PC-9 (cell line): ENCODE measurements at regions of chr14 and their contacts with region 1.

Region 1: DNA sequence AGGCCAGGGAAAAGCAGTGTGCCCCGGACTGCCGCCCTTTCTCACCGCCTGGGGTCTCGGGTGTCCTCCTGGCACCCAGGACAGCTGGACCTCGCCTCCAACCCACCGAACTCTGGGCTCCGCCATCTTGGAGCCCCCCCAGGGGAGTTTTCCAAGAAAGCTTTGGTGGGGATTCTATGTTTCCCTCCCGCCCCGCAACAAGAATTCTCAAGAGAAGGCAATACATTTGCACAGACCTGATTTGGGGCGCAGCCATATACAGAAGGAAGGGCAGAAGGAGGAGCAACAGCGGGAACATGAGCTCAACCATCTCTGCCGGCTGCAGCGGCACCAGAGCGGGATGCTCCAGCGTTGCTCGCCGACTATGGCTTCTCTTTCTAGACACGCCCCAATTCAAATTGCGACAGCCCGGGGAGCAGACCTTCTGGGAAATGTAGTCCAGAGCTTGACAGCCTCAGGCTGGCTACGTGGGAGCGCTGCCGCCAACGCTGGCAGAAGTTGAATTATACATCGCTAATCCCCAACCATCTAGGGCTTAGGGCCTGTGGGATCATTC is at the start of gene RDH11:
- DNase-seq: peak; percentile 86 to 91
- H3K4me3 ChIP-seq: peak within 1 kb of the TSS; percentile 97
- H3K27ac ChIP-seq: peak within 1 kb of the TSS; percentile 78
- H3K4me1 ChIP-seq: peaks cover 19% of the 10 kb centered on the region
- H3K27me3 ChIP-seq: no peaks in the 10 kb centered on the region
- CTCF ChIP-seq: no peak
- total RNA-seq, gene RDH11: 73.2 and 97.0 TPM in 2 replicates

Region 2: DNA sequence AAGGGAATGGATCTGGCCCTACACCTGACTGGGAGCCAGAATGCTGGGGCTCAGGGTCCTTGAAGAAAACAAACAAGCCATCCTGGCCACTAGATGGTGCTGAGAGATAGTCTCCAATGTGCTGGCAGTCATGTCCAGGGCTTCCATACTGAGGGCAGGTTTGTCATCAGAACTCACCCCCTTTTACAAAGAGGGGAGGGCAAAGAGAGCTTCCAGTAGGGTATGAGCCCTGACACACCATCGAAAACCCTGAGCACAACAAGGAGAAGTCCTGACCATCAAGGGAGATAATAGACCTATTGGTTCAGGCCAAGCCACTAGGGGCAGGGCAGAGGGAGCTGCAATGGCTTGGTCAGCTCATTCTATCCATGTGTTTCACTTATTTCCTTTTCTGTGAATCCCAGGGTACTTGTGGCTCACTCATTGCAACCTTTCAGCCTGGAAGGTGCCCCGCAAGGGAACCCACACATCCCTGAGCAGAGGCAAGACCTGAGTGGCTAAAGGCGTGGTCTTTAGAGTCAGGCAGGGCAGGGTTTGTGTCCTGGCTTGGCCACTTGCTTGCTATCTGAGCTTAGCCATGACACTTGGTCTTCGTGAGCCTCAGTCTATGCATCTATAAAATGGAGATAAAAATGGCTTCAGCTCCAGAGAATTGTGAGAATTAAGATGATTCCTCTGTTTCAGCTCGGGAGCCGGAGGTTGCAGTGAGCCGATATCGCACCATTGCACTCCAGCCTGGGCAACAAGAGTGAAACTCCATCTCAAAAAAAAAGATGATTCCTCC is 168.6 kb before region 1 on chr14:
- CTCF ChIA-PET with region 1: interaction called, 13 read pairs
- POLR2A ChIA-PET with region 1: no interaction called
- intact Hi-C with region 1: no loop called
- DNase-seq: peak; percentile 43 to 47
- H3K4me3 ChIP-seq: no peak overlapping the region
- H3K27ac ChIP-seq: no peak overlapping the region
- H3K4me1 ChIP-seq: no peaks in the 10 kb centered on the region
- H3K27me3 ChIP-seq: peaks cover 17% of the 10 kb centered on the region; the same call in 1 of the 2 replicates
- CTCF ChIP-seq: peak; percentile 82

Region 3: GRCh38 chr14:67619446-67620216 is 75.8 kb before region 1 on chr14 and contains the start of gene ARG2:
- CTCF ChIA-PET with region 1: interaction called, 4 read pairs
- POLR2A ChIA-PET with region 1: no interaction called
- intact Hi-C with region 1: loop called (anchors 2 kb)
- DNase-seq: peak; percentile 98 to 99
- H3K4me3 ChIP-seq: peak within 1 kb of the TSS; percentile 73
- H3K27ac ChIP-seq: peak within 1 kb of the TSS; percentile 36
- H3K4me1 ChIP-seq: peaks cover 27% of the 10 kb centered on the region
- H3K27me3 ChIP-seq: no peaks in the 10 kb centered on the region
- CTCF ChIP-seq: no peak
- total RNA-seq, gene ARG2: 8.6 and 10.2 TPM in 2 replicates

Region 4: DNA sequence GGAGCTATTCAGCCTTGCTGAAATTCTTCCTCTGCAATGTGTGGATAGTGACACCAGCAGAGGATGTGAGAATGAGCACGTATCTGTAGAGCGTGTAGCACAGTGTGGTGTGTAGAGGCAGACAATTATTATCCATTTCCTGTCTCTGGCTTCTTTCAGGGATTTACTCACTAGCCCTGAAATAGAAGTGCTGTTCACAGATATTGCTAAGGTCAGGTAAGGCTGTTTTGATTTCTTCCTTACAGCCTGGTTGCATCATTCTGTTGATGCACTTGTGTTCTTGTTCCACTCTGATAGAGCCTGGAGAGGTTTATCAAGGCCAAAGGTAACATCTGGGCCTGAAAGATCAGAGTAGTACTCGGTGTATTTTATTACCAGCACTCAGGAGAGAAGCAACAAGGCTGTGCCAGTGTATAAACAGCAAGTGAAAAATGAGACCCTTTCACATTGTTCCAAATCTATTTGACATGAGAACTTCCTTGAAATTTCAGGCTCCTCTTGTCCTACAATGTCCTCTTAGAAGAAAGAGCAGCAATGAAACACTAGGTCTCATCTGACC is 59.0 kb before region 1 on chr14:
- CTCF ChIA-PET with region 1: no interaction called
- POLR2A ChIA-PET with region 1: interaction called, 10 read pairs
- intact Hi-C with region 1: no loop called
- DNase-seq: no peak
- H3K4me3 ChIP-seq: no peak overlapping the region
- H3K27ac ChIP-seq: peak overlapping the region; percentile 67
- H3K4me1 ChIP-seq: peaks cover 13% of the 10 kb centered on the region
- H3K27me3 ChIP-seq: no peaks in the 10 kb centered on the region
- CTCF ChIP-seq: no peak

Region 5: DNA sequence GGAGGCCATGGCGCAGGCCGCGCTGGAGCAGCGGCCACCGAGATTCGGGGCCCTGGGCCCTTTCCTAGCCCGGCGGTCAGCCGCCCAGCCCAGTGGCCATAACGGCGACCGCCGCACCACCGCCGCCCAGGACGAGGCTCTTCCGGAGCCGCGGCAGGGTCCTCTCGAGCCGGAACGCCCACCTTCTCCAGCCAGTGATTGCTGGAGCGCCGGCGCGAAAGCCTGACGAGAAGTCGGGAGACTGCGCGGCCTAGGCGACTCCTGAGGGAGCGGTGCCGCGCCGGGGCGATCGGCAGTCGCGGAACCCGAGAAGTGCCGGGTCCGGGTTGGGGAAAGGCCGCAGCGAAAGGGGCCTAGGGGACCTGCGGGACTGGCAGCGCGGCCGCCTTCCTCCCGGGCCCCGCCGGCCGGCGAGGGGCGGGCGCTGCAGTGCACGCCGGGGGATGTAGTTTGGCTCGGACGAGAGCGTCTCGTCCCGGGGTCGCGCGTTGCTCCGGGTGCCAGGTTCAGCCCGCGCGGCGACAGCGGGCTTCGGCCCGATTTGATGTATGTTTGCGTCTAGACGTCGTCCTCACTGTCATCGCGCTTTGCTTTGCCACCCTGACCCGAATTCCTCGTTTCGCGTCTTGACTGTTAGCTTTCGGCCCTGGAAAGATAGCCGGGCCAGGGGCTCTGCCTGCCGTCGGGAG is 20.8 kb before region 1 on chr14 and contains the start of gene VTI1B:
- CTCF ChIA-PET with region 1: no interaction called
- POLR2A ChIA-PET with region 1: no interaction called
- intact Hi-C with region 1: loop called (anchors 1 kb)
- DNase-seq: peak; percentile 66 to 83
- H3K4me3 ChIP-seq: peak within 1 kb of the TSS; percentile 87
- H3K27ac ChIP-seq: peak within 1 kb of the TSS; percentile 79
- H3K4me1 ChIP-seq: peaks cover 20% of the 10 kb centered on the region
- H3K27me3 ChIP-seq: no peaks in the 10 kb centered on the region
- CTCF ChIP-seq: no peak; the same call in 1 of the 2 replicates
- total RNA-seq, gene VTI1B: 131 and 148 TPM in 2 replicates

Region 6: GRCh38 chr14:67710209-67710608 is 14.7 kb after region 1 on chr14:
- CTCF ChIA-PET with region 1: no interaction called
- POLR2A ChIA-PET with region 1: interaction called, 21 read pairs
- intact Hi-C with region 1: no loop called
- DNase-seq: no peak
- H3K4me3 ChIP-seq: no peak overlapping the region
- H3K27ac ChIP-seq: no peak overlapping the region
- H3K4me1 ChIP-seq: 0 out of 2 replicates have a peak, but pooled peaks cover 4% of the 10 kb centered on the region
- H3K27me3 ChIP-seq: no peaks in the 10 kb centered on the region
- CTCF ChIP-seq: no peak

Region 7: DNA sequence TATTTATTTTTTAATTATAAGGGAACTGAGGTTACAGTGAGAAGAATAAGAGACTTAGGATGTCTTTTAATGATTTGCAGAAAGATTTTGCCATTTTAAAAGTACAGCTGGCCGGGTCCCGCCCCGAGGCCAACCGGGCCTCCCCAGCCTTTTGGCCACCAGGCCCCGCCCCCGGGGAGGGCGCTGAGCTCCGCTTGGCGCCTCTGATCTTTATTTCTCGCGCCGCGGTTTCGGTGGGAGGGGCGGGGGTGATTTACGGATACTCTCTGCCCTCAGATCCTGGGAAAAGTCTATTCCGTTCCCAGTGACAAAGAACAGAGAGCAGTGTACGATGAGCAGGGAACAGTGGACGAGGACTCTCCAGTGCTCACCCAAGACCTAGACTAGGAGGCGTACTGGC is 103.3 kb after region 1 on chr14:
- CTCF ChIA-PET with region 1: no interaction called
- POLR2A ChIA-PET with region 1: no interaction called
- intact Hi-C with region 1: no loop called
- DNase-seq: no peak
- H3K4me3 ChIP-seq: no peak overlapping the region
- H3K27ac ChIP-seq: no peak overlapping the region
- H3K4me1 ChIP-seq: no peaks in the 10 kb centered on the region
- H3K27me3 ChIP-seq: no peaks in the 10 kb centered on the region
- CTCF ChIP-seq: no peak

Region 8: GRCh38 chr14:68357777-68358176 is 662.3 kb after region 1 on chr14:
- CTCF ChIA-PET with region 1: interaction called, 11 read pairs
- POLR2A ChIA-PET with region 1: no interaction called
- intact Hi-C with region 1: no loop called
- DNase-seq: no peak
- H3K4me3 ChIP-seq: no peak overlapping the region
- H3K27ac ChIP-seq: no peak overlapping the region
- H3K4me1 ChIP-seq: peaks cover 8% of the 10 kb centered on the region
- H3K27me3 ChIP-seq: no peaks in the 10 kb centered on the region
- CTCF ChIP-seq: no peak